ENCODE measurements at regions of chr2 and their contacts with region 1.

Region 1: GRCh38 chr2:68467077-68467960 is at the starts of genes APLF and FBXO48:
- DNase-seq: peak; percentile 98 to 100 (median 99)
- H3K4me3 ChIP-seq: peak within 1 kb of the TSS; percentile 85 to 98
- H3K4me3 Mint-ChIP-seq: peak within 1 kb of the TSS; percentile 90 to 97 (median 96)
- H3K27ac ChIP-seq: peak within 1 kb of the TSS; percentile 96
- H3K27ac Mint-ChIP-seq: peak within 1 kb of the TSS; percentile 89 to 98 (median 97)
- H3K4me1 ChIP-seq: peaks cover 45% of the 10 kb centered on the region
- H3K4me1 Mint-ChIP-seq: peaks cover 25 to 55% (median 38%) of the 10 kb centered on the region in 4 donors
- H3K27me3 ChIP-seq: no peaks in the 10 kb centered on the region
- H3K27me3 Mint-ChIP-seq: no peaks in the 10 kb centered on the region
- total RNA-seq, gene APLF: 8.2 to 9.5 TPM
- total RNA-seq, gene FBXO48: 6.4 to 6.5 TPM

Region 2: GRCh38 chr2:68157402-68158133 is 309.8 kb before region 1 on chr2 and contains the start of gene PNO1:
- CTCF ChIA-PET with region 1: no interaction called
- POLR2A ChIA-PET with region 1: interaction called, 5 read pairs
- intact Hi-C with region 1: loop called (anchors 1 kb)
- DNase-seq: peak; percentile 97 to 98 (median 98)
- H3K4me3 ChIP-seq: peak within 1 kb of the TSS; percentile 82 to 97
- H3K4me3 Mint-ChIP-seq: peak within 1 kb of the TSS; percentile 95 to 99 (median 98)
- H3K27ac ChIP-seq: peak within 1 kb of the TSS; percentile 97
- H3K27ac Mint-ChIP-seq: peak within 1 kb of the TSS; percentile 99 to 100 (median 100)
- H3K4me1 ChIP-seq: peaks cover 40% of the 10 kb centered on the region
- H3K4me1 Mint-ChIP-seq: peaks cover 29 to 65% (median 45%) of the 10 kb centered on the region in 4 donors
- H3K27me3 ChIP-seq: no peaks in the 10 kb centered on the region
- H3K27me3 Mint-ChIP-seq: peaks cover 0 to 2% of the 10 kb centered on the region in 2 donors
- total RNA-seq, gene PNO1: 8.7 to 11.3 TPM

Region 3: DNA sequence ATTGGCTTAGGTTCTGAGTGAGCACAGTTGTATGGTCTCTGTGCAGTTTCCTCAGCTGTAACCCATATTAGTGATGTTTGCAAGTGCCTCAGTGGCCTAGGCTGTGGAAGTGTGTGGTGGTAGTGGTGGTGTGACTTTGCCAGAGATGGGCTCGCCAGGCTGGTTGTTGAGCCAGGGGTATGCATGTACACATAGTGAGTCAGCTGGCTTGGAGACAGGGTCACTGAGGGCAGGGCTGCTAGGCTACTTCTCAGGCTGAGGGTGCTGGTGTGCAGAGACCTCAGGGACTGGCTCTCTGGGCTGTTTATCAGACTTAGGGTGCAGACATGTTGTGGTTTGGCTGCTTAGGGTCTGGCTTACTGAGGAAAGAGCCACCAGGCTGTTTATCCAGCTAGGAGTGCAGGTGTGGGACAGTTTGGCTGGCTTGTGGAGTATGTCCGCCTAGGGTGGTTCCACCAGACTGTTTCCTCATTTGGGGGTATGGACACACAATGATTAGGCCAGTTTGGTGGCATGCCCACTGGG is 15.0 kb after region 1 on chr2:
- CTCF ChIA-PET with region 1: interaction called, 38 read pairs
- POLR2A ChIA-PET with region 1: interaction called, 17 read pairs
- intact Hi-C with region 1: loop called (anchors 2 kb)
- DNase-seq: no peak
- H3K4me3 ChIP-seq: no peak overlapping the region
- H3K4me3 Mint-ChIP-seq: no peak overlapping the region
- H3K27ac ChIP-seq: no peak overlapping the region
- H3K27ac Mint-ChIP-seq: peak overlapping the region in 1 of 7 donors; percentile 53
- H3K4me1 ChIP-seq: no peaks in the 10 kb centered on the region
- H3K4me1 Mint-ChIP-seq: peaks cover 0 to 3% (median 0%) of the 10 kb centered on the region in 4 donors
- H3K27me3 ChIP-seq: no peaks in the 10 kb centered on the region
- H3K27me3 Mint-ChIP-seq: no peaks in the 10 kb centered on the region

Region 4: GRCh38 chr2:68594674-68595492 is 127.6 kb after region 1 on chr2:
- CTCF ChIA-PET with region 1: interaction called, 149 read pairs
- POLR2A ChIA-PET with region 1: interaction called, 7 read pairs
- intact Hi-C with region 1: loop called (anchors 1 kb)
- DNase-seq: peak; percentile 46 to 56 (median 51)
- H3K4me3 ChIP-seq: no peak overlapping the region
- H3K4me3 Mint-ChIP-seq: peak overlapping the region in 7 of 8 donors; percentile 1 to 70 (median 35)
- H3K27ac ChIP-seq: no peak overlapping the region
- H3K27ac Mint-ChIP-seq: peak overlapping the region in 3 of 7 donors; percentile 10 to 49 (median 23)
- H3K4me1 ChIP-seq: peaks cover 7% of the 10 kb centered on the region
- H3K4me1 Mint-ChIP-seq: peaks cover 2 to 12% (median 7%) of the 10 kb centered on the region in 4 donors
- H3K27me3 ChIP-seq: no peaks in the 10 kb centered on the region
- H3K27me3 Mint-ChIP-seq: peaks cover 5 to 10% of the 10 kb centered on the region in 2 donors

Region 5: GRCh38 chr2:68734688-68735525 is 267.6 kb after region 1 on chr2 and contains the start of gene ARHGAP25:
- CTCF ChIA-PET with region 1: interaction called, 11 read pairs
- POLR2A ChIA-PET with region 1: interaction called, 8 read pairs
- intact Hi-C with region 1: no loop called
- DNase-seq: peak; percentile 58 to 79 (median 61)
- H3K4me3 ChIP-seq: peak within 1 kb of the TSS; percentile 83 to 99
- H3K4me3 Mint-ChIP-seq: no peak within 1 kb of the TSS
- H3K27ac ChIP-seq: peak within 1 kb of the TSS; percentile 81
- H3K27ac Mint-ChIP-seq: no peak within 1 kb of the TSS
- H3K4me1 ChIP-seq: peaks cover 54% of the 10 kb centered on the region
- H3K4me1 Mint-ChIP-seq: peaks cover 23 to 44% (median 34%) of the 10 kb centered on the region in 4 donors
- H3K27me3 ChIP-seq: no peaks in the 10 kb centered on the region
- H3K27me3 Mint-ChIP-seq: no peaks in the 10 kb centered on the region
- total RNA-seq, gene ARHGAP25: 162 to 163 TPM

Region 6: DNA sequence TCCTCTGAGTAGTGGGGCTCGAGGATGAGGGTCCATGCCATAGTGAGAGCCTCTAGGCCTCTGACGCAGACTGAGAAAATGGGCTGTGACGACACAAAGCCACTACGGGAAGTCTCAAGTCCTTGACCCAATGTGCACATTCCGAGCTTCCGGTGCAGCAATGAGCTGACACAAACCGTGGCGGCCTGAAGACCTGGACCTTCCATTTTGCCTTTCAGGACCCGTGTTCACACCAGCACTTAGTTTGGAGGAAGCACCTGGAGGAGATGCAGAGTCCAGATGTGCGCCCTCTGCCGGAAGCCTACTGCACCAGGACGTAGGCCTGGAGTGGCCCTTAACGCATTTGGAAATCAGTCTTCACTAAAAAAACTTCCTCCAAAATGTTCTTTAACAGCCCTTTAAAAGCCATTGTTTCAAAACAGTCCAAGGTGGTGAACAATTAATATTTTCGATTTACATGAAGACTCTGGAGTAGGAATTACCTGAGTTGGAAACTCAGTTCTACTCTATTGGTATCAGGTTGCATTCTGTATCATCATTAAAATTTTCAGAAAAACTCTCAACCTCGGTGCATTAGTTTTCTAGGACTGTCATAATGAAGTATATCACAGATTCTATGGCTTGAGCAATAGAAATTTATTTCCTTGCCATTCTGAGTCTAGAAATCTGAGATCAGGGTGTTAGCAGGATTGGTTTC is 370.0 kb after region 1 on chr2:
- CTCF ChIA-PET with region 1: interaction called, 15 read pairs
- POLR2A ChIA-PET with region 1: interaction called, 3 read pairs
- intact Hi-C with region 1: loop called (anchors 1 kb)
- DNase-seq: peak; percentile 50 to 62 (median 54)
- H3K4me3 ChIP-seq: no peak overlapping the region
- H3K4me3 Mint-ChIP-seq: peak overlapping the region in 2 of 8 donors; percentile 24 to 38
- H3K27ac ChIP-seq: no peak overlapping the region
- H3K27ac Mint-ChIP-seq: peak overlapping the region in 3 of 7 donors; percentile 47 to 66 (median 60)
- H3K4me1 ChIP-seq: peaks cover 26% of the 10 kb centered on the region
- H3K4me1 Mint-ChIP-seq: peaks cover 19 to 44% (median 31%) of the 10 kb centered on the region in 4 donors
- H3K27me3 ChIP-seq: no peaks in the 10 kb centered on the region
- H3K27me3 Mint-ChIP-seq: no peaks in the 10 kb centered on the region